Endothelial cell of umbilical vein (primary cell): ENCODE measurements at regions of chr2 and their contacts with region 1.

Region 1: DNA sequence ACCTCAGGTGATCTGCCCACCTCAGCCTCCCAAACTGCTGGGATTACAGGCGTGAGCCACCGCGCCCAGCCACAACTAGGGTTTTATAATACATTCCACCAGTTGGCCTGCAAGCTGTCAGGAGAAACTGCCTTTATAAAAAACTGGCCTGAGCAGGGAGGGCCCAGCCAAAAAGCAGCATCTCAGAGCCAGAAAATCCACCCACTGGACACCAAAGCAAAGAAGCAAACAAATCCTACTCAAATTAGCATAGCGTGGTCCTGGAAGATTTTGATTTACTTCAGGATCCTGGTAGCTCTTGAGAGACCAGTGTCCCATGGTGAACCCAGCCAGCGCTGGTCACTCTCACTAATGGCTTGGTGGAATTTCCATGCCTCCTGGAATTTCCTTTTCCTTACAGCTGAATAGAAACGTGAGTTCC is 60.0 kb upstream of the PXDN start:
- DNase-seq: no peak
- H3K4me3 ChIP-seq: no peak overlapping the region
- H3K27ac ChIP-seq: no peak overlapping the region
- H3K4me1 ChIP-seq: no peaks in the 10 kb centered on the region
- H3K27me3 ChIP-seq: no peaks in the 10 kb centered on the region
- CTCF ChIP-seq: no peak
- POLR2A ChIP-seq: no peak

Region 2: GRCh38 chr2:1817256-1818051 is 13.1 kb after region 1 on chr2:
- CTCF ChIA-PET with region 1: interaction called, 20 read pairs
- POLR2A ChIA-PET with region 1: no interaction called
- dilution Hi-C with region 1: no loop called
- intact Hi-C with region 1: no loop called
- DNase-seq: peak; percentile 32
- H3K4me3 ChIP-seq: no peak overlapping the region
- H3K27ac ChIP-seq: no peak overlapping the region
- H3K4me1 ChIP-seq: no peaks in the 10 kb centered on the region
- H3K27me3 ChIP-seq: peaks cover 0 to 2% of the 10 kb centered on the region in 2 experiments
- CTCF ChIP-seq: peak; percentile 89 to 97
- POLR2A ChIP-seq: no peak